Breast epithelium (tissue), 4 donors: ENCODE measurements at regions of chr22 and their contacts with region 1.

Region 1: DNA sequence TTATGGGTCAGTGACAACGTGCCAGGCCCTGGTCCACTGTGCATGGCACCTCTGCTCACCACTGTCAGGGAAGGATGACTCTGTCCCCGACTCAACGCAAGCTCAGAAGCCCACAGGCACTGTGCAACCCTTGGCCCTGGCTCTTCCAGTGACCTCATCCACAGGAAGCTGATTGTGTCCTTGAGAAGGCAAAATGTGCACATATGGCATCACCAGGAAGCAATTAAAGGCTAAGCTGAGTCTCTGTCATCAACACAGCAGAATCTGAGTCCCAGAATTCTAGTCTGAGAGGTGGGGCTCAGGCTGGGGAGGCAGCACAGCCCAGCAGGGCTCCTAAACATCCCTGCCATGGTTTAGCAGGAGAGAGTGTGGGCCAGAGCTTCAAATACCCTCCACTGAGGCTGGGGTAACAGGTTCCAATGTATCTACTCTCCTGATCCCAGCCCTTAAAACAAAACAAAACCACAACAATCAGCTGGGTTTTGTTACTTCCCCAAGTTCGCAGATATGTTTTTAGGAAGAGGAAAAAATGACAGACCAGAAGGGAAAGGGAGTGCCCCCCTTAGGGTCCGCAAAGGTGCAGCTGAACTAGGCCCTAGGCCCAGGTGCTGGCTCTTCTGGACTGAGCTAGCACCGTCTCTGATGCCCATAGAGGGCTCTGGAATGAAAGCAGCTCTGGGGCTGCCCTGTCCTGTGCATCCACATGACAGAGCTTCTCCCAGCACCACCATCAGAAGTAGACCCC is 33.5 kb upstream of the GNAZ start:
- DNase-seq: no peak
- H3K4me3 ChIP-seq: no peak overlapping the region
- H3K27ac ChIP-seq: no peak overlapping the region
- H3K4me1 ChIP-seq: no peaks in the 10 kb centered on the region
- H3K27me3 ChIP-seq: peaks cover 0 to 3% of the 10 kb centered on the region in 2 donors
- CTCF ChIP-seq: no peak
- POLR2A ChIP-seq: no peak

Region 2: GRCh38 chr22:22181341-22181850 is 855.5 kb before region 1 on chr22:
- intact Hi-C with region 1: no loop called
- DNase-seq: no peak
- H3K4me3 ChIP-seq: no peak overlapping the region
- H3K27ac ChIP-seq: no peak overlapping the region
- H3K4me1 ChIP-seq: no peaks in the 10 kb centered on the region
- H3K27me3 ChIP-seq: peaks cover 0 to 13% of the 10 kb centered on the region in 2 donors
- CTCF ChIP-seq: no peak
- POLR2A ChIP-seq: no peak

Region 3: DNA sequence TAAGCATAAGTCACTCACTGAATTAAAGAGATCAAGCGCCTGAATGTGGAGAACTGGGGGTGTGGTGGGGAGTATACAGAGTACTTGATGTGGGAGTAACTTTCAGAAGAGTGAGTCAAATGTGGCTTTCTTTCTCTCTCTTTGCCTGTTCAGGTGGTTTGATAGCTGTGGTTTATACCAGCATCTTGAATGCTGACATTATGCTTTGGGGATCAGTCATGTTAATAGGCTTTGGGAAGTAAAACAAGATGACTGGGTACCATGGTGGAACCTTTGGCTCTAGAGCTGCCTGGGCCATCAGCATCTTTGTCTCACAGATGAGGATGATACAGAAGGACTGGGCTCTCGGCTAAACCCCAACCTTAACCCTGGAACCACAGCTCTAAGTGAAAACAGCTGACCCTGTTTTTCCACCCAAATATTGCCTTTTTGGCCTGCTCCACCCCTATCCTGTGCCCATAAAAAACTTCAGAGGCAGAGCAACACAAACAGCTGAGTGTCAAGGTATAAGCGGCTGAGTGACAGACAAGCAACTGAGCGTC is 24.7 kb before region 1 on chr22:
- intact Hi-C with region 1: no loop called
- DNase-seq: no peak
- H3K4me3 ChIP-seq: no peak overlapping the region
- H3K27ac ChIP-seq: no peak overlapping the region
- H3K4me1 ChIP-seq: no peaks in the 10 kb centered on the region
- H3K27me3 ChIP-seq: no peaks in the 10 kb centered on the region
- CTCF ChIP-seq: no peak
- POLR2A ChIP-seq: no peak

Region 4: DNA sequence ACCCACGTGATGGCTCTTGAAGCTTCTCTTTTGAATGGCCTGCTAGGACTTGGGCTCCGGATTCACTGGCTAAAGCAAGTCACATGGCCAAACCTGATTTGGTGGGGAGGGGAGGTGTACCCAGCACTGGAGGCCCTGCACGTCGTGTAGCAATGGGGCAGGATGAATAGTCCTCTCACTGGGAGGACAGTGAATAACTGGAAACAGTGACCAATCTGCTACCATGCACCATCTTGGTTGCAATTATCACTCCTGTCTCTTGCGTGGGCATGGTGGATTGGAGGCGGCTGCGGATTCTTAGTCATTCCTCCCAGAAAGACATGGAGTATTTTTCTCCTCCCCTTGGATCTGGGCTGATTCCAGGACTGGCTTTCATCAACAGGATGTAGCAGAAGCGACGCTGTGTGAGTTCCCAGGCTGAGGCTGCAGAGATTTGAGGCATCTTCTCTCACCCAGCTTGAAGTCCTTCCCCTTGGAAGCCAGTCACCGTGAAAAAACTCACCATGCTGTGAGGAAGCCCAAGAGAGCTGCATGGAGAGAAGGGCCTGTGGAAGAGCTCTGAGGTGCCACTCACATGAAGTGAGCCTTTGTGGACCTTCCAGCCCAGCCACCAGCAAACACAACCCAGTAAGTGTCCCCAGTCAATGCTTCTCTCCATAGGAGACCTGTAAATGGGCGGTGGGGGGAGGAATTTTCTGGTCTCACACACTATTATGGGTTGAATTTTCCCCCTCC is 472.9 kb after region 1 on chr22:
- intact Hi-C with region 1: loop called (anchors 10 kb)
- DNase-seq: no peak
- H3K4me3 ChIP-seq: no peak overlapping the region
- H3K27ac ChIP-seq: no peak overlapping the region
- H3K4me1 ChIP-seq: no peaks in the 10 kb centered on the region
- H3K27me3 ChIP-seq: no peaks in the 10 kb centered on the region
- CTCF ChIP-seq: no peak
- POLR2A ChIP-seq: no peak